GM10248 (cell line): ENCODE measurements at regions of chr22 and their contacts with region 1.

Region 1: GRCh38 chr22:50562523-50563412 is at the start of gene SYCE3:
- DNase-seq: peak; percentile 98
- CTCF ChIP-seq: peak; percentile 85

Region 2: DNA sequence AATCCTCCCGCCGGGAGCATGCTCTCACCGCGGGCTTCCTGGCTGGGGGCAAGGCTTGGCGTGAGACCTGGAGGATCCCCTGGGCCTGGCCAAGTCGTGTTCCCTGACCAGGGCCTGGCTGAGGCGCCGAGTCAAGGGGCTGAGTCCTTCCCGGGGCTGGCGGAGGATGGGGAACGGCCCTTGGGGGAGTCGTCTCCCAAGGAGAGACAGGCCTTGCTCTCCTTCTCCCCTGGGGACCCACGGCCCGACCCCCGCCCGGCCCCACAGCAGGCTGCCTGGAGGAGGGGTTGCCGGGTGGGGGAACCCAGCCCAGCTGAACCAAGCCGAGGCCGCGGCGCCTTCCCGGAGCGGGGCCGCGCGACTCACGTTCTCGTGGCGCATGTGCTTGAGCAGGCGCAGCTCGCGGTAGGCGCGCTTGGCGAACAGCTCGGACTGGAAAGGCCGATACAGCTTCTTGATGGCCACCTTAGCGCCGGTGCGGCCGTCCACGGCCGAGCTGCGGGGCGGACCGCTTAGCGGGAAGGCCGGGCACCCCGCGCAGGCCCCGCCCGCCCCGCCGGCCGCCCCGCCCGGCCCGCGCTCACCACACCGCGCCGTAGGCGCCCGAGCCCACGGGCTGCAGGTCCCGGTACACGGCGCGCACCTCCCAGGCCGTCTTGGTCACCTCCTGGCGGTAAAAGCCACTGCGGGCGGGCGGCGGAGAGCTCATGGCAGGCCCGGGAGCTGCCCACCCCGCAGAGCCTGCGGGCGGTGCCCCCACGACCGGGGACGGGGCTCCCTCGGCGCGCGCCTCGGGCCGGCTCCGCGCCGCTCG is 301.8 kb before region 1 on chr22:
- CTCF ChIA-PET with region 1: no interaction called
- POLR2A ChIA-PET with region 1: no interaction called
- DNase-seq: peak; percentile 73
- CTCF ChIP-seq: no peak

Region 3: DNA sequence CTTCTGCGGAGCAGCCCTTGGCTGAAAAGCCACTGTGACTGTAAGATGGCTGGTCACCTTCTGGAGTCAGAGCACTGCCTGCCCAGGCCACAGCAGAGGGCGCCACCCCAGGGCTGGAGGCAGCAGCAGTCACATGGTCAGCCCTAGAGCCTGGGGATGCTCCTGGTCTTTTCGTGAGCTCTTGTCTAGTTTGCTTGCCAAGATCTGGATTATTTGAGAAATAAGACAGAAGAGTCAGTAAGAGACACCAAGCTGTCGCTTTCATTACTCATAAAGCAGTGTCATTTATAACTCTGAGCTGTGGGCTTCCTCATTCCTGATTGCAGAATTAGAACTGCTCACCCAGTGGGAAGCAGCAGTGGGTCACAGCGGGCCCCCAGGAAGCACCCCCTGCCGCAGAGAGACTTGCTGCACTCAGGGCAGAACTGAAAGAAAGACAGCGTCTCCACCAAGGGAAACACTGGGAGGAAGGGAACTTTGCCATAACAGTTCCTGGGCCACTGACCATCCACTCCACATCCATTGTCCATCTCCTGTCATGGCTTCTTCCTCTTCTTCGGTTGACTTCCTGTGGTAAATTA is 162.9 kb before region 1 on chr22:
- CTCF ChIA-PET with region 1: no interaction called
- POLR2A ChIA-PET with region 1: no interaction called
- DNase-seq: peak; percentile 56
- CTCF ChIP-seq: peak; percentile 63

Region 4: DNA sequence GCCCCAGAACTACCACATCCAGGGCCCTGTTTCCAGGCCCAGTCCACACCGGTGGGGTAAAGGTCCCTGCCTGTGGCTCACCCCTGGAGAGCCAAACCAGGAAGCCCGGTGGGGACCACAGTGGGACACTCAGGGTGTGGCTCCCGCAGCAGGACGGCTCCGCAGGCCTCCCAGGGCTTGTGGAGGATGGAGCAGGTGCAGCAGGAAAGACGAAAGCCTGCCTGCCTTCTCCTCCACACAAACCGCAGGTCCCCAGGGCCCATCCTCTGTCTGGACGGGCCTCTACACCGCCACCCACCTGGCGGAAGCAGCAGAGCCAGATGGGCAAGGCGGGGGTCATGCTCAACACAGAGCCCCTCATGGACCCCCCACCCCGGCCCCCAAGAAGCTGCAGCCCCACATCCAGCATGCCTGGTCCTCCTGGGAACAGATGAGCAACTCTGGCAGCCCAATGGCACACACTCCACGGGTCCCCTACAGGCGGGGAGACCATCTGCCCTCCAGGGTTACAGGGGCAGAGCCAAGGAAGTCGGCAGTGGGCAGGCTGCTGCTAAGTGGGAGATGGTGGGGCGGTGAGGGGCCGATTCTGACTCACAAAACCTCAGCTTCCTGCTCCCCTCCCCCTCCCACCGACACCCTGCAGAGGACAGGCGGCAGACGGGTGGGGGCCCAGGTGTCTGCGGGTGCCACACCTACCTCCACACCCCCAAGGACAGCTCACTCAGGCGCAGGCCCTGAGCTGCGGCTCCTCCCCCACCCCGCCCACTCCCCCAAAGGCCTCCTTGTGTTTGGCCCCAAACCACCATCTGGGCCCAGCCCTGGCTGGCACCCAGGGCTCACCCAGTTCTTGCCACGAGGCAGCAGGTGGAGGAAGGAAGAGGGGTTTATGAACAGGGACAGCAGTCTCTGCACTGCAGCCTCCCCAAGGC is 93.1 kb before region 1 on chr22:
- CTCF ChIA-PET with region 1: no interaction called
- POLR2A ChIA-PET with region 1: no interaction called
- DNase-seq: peak; percentile 92
- CTCF ChIP-seq: no peak

Region 5: DNA sequence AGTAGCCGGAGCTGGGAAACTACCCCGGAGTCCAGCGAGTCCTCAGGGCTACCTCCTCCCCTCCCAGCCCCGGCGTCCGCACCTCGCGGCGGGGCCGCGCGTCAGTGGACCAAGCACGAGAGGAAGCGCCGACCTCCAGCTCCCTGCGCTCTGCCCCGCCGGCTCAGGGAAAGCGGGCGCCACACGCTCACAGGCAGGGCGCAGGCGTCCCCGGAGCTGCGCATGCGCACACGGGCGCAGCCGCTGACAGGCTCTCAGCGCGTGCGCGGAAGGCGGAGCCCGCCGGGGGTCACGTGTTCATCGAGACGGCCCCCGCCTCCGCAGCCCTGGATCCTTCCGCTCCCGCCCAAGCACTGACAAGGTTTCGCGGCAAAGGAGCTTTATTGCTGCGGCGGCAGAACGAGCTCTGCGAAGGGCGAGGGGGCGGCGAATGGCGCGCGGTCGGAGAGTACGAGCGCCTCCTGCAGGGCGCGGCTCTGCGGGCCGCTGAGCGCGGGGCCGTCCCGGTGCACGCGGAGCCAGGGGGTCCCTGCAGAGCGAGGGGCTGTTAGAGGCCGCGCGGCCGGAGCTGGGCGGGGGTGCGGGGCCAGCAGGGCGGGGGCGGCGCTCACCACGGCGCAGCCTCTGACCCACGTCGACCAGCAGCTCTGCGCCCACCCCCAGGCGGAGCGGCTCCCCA is 37.2 kb before region 1 on chr22 and contains the start of gene SCO2:
- CTCF ChIA-PET with region 1: interaction called, 41 read pairs
- POLR2A ChIA-PET with region 1: no interaction called
- DNase-seq: peak; percentile 97
- CTCF ChIP-seq: peak; percentile 64

Region 6: GRCh38 chr22:50544078-50544745 is 18.6 kb before region 1 on chr22:
- CTCF ChIA-PET with region 1: interaction called, 68 read pairs
- POLR2A ChIA-PET with region 1: interaction called, 4 read pairs
- DNase-seq: peak; percentile 78
- CTCF ChIP-seq: peak; percentile 73

Region 7: GRCh38 chr22:50576070-50576469 is 13.3 kb after region 1 on chr22:
- CTCF ChIA-PET with region 1: interaction called, 43 read pairs
- POLR2A ChIA-PET with region 1: interaction called, 3 read pairs
- DNase-seq: no peak
- CTCF ChIP-seq: no peak

Region 8: DNA sequence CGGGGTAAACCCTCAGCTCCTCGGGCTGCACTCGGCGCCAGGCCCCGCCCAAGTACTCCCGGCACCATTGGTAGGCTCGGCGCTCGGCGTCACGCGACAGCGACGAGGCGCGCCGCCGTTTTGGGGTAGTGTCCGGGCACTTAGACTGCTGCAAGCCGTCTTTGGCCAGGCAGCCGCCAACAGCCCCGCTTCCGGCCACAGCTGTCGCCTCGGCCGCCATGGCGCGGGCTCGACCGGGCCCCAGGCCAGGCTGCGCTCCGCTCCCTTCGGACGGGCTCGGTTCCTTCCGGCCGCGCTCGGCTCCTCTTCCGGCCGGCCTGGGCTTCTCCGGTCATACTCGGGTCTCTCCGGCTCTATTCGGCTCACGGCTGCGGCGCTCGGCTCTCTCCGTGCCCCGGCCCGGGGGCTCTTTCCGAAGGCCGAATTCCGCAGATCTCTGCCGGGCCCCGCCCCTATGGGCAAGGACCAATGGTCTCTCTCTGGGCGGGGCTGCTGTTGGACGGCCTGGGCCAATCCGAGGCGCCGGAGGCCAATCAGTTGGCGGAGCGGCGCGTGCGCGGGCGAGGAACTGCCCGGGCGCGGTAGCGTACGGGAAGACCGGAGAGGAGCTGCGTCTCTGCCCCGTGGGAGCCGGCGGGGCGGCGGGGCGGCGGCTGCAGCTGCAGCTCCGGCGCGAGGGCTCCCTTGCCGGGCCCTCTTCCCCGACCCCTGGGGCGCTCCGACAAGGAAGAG is 20.0 kb after region 1 on chr22 and contains the start of gene CHKB:
- CTCF ChIA-PET with region 1: interaction called, 43 read pairs
- POLR2A ChIA-PET with region 1: interaction called, 3 read pairs
- DNase-seq: peak; percentile 100
- CTCF ChIP-seq: no peak